ENCODE measurements at regions of chr1 and their contacts with region 1.

Region 1: DNA sequence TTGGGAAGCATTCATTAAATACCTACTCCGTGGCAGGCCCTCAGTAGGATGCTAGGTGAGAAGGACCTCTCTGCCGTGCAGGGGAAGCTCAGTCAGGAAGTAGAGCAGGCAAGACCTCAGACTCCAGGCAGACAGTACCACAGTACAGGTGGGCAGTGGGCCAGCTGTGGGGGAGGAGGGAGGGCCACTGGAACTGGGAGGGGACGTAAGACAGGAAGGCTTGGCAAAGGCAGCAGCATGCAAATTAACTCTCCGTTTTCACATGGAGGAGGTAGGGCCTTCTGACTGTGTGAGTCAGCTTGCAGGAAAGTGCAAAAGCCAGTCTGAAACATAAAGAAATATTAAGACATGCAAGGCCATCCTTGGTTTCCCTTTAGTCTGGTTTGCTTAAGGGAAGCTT is 157.7 kb downstream of the TRIM33 start:
- DNase-seq: peak; percentile 48 to 84
- H3K4me3 ChIP-seq: no peak overlapping the region
- H3K27ac ChIP-seq: peak overlapping the region; percentile 30 to 34
- H3K4me1 ChIP-seq: peaks cover 0 to 17% (median 15%) of the 10 kb centered on the region in 4 donors
- H3K27me3 ChIP-seq: no peaks in the 10 kb centered on the region
- CTCF ChIP-seq: no peak

Region 2: DNA sequence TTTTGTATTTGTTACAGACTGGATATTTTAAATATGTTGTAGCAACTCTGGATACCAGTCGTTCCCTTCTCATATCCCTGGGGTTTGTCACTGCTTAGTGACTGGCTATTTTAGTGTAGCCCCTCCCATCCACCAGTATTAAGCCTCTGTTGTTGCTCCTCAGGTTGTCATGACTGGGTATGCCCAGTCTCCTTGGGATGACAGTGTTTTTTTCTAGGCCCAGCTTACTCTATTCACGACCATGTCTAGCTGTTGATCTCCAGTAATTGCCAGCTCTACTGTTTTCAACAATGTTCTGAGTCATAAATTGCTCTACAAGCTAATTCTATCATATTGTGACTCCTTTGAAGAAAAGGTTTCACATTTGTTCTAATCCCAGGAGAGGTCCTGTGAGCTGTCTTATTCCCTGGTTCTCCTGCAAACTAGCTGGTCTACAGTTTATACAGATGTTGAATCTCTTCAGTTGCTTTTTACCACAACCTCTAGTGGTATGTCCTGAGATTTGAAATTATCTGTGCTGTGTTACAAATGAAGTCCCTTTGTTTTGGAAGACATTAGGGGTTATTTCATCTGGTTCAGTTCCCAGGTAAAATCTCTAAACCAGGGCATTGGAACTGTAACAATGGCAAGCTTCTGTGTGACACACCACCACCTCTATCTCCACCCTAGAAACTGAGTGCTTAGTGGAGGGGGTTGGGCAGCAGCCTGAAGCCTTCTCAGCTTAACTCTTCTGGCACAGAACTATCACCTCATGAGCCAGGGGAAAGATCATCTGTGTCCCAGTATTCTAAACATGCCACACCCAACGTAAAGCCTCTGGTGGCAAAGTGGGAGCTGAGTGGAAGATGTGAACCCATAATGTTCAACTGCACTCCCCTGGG is 33.1 kb after region 1 on chr1:
- intact Hi-C with region 1: loop called (anchors 5 kb)
- DNase-seq: no peak
- H3K4me3 ChIP-seq: no peak overlapping the region
- H3K27ac ChIP-seq: no peak overlapping the region
- H3K4me1 ChIP-seq: no peaks in the 10 kb centered on the region
- H3K27me3 ChIP-seq: no peaks in the 10 kb centered on the region
- CTCF ChIP-seq: no peak

Measured in tibial artery (tissue), 4 donors.